Cardiac septum (tissue), 1 donor: ENCODE measurements at regions of chr1 and their contacts with region 1.

Region 1: GRCh38 chr1:153510984-153511410 is 24.8 kb downstream of the S100A6 start:
- DNase-seq: peak; percentile 91

Region 2: GRCh38 chr1:152968248-152968647 is 542.7 kb before region 1 on chr1:
- intact Hi-C with region 1: no loop called
- DNase-seq: no peak

Region 3: DNA sequence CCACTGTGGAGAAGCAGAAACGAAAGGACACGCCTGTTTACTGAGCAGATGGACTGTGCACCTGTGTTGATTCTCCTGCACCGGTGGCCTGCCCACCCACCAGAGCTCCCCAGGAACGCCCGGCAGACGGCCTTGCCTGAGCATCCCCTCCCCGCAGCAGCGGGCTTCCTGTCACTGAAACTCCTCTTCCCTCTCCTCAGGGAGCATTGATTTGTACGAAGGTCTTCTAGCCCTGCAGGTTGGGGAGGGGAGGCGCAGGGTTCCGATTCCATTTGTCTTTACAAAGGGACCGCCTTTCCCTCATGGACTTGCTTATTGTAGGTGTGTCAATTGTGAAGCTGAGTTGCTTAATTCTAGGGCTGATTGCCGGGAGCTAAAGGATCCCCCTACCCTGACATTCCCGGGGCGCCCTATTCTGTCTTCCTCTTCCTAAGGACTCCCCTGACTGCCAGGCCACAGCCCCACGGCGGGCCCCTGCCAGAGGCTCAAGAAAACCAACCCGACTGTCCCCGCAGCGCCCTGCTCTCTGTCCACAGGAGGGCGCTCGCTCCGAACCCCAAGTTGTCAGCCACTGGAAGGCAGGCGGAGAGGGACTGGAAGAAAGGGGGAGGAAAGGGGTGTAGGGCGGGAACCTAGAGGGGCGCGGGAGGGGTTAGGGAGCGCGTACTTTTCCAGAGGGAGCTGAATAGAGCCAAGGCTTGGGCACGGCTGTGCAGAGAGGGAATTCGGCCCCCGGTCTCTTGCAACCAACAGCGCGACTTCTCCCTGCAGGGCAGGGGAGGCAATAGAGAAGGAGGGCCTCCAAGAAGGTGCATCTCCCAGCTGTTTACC is 22.0 kb after region 1 on chr1:
- intact Hi-C with region 1: loop called (anchors 1 kb)
- DNase-seq: peak; percentile 96

Region 4: DNA sequence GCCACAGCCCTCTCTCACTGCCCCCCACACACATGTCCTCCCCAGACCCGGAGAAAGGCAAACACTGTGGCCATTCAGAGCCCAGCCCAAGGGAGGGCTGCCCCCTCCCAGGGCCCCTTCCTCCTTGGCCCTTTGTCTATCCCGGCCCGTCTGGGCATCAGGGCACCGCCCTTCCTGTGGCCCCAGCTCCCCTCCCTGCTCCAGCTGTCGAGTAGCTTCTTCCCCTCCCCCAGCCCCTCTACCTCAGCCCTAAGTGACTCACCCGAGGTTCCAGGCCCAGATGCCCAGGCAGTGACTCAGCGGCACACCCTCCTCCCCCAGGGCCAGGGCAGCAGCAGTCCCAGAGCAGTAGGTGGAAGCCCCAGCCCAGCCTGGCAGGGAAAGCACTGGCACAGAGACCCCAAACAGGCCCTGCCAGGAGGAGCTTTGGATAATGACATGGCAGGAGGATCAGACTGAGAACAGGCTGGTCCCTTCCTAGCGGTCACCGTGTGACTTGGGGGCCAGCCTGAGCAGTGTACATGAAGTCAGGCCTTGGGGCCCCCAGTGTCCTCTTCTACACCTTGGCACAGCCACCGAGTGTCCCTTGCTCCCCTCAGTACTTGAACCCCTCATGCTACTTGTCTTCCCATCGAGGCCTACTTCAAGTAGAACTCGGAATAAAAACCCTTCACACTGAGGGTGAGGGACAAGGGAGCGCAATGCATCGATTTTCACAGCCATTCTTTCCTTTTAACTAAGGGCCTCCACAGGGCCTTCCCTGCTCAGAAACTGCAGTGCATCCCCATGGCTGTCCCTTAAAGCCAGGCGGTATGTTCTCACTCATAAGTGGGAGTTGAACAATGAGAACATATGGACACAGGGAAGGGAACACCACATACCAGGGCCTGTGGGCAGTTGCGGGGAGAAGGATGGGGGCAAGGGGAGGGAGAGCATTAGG is 55.7 kb after region 1 on chr1:
- intact Hi-C with region 1: loop called (anchors 1 kb)
- DNase-seq: peak; percentile 99

Region 5: GRCh38 chr1:153617675-153618074 is 106.7 kb after region 1 on chr1:
- intact Hi-C with region 1: loop called (anchors 5 kb)
- DNase-seq: no peak

Region 6: GRCh38 chr1:153633716-153634665 is 123.0 kb after region 1 on chr1 and contains the start of gene CHTOP:
- intact Hi-C with region 1: loop called (anchors 5 kb)
- DNase-seq: peak; percentile 99
- total RNA-seq, gene CHTOP: 90.4 TPM

Region 7: DNA sequence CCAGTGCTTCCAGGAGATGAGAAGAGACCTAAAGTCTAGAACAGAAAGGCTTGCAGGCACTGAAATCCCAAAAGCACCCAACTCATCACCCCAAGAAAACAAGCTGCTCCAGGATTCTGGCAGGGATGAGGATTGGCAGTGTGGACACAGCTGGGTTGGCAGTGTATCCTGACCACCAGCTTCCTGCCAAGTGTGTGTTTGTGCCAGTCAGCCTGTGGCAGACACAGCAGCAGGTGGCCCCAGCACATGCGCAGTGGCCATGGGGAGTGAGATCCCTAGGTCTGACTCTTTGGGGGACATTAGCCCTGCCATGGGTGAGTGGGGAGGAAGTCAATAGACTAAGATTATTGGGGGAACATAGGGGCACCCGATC is 138.9 kb after region 1 on chr1:
- intact Hi-C with region 1: no loop called
- DNase-seq: peak; percentile 76

Region 8: GRCh38 chr1:153670859-153671627 is 160.0 kb after region 1 on chr1 and contains the start of gene ILF2:
- intact Hi-C with region 1: loop called (anchors 5 kb)
- DNase-seq: peak; percentile 96
- total RNA-seq, gene ILF2: 76.5 TPM